Aorta (tissue), 5 donors: ENCODE measurements at regions of chr7 and their contacts with region 1.

Region 1: DNA sequence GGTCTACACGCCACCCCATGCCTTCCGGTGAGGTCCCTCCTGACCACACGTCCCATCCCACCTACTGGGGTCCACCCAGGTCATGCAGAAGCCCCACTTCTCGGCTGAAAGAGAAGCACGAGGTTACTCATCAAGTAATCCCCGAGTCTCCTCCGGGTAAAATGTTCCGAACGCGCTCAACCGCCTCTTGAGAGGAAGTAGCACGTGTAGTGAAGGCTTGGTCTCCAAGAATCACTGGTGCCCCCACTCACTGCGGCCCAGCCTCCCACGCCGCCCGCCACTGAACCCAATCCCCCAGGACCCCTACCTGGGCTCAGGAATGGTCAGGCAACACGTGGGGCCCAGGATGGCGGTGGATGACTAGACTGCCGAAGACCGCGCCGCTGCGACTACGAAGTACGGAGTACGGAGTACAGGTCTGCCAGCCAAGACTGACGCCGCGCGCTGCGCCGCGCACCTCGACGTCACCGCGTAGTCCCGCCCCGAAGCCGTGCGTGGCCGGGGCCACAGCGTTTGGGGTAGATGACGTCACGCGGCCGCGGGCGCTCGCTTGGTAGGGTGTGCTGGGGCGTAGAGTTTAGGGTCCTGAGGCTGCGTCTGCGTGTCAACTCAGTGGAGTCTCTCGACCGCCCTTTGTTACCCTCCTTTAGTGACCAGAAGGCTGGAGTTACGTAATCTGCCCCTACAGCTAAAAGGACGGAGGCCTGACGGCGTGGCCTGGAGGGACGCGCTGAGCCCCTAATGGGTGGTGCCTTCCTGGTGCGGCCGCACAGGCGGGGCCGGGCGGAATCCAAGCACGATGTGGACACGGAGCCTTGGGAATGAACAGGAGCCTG is 7.6 kb upstream of the MYO1G start:
- DNase-seq: peak; percentile 97 to 99
- ATAC-seq: peak; percentile 99
- H3K4me3 ChIP-seq: peak overlapping the region in 1 of 2 donors; percentile 24
- H3K27ac ChIP-seq: peak overlapping the region; percentile 38 to 92
- H3K4me1 ChIP-seq: peaks cover 0 to 1% of the 10 kb centered on the region in 2 donors
- H3K27me3 ChIP-seq: no peaks in the 10 kb centered on the region

Region 2: DNA sequence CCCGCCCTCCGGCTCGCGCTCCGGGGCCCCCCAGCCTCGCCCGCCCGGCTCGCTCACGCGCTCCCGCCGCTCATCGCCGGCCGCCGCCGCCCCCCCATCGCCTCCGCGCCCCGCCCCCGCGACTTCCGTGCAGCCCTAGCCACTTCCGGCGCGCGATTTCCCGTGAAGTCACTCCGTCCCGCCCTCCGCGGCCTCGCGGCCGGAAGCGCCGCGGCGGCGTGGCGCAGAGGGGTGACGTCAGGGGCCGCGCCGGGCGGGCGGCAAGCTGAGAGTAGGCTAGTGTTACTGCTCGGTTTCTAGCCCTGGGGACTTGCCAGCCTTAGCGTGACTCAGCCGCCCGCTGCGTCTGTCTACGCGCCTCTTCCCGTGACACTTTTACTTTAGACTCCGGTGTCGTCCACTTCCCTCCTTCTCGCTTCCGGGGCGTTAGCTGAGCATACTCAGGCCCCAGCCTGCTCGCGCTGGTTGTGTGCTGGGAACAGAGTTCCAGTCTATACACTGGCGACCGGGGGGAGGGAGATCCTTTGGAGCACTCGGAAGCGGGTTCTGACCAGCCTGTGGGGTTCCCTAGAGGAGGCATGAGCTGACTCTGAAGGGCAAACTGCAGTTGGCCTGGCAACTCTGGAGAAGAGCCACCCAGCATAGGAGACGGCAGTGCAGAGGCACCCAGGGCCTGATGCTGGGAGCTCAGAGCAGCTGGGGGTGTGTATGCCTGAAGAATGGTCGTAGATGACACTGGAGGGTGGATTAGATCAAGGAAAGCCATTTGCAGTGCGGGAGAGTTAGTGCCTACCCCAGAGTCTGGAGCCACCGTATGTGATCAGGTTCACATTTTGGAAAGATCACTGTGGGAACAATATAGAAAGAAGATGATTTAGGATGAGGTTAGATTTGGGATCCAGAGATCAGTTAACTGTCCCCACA is 100.8 kb before region 1 on chr7 and contains the start of gene PURB:
- intact Hi-C with region 1: loop called (anchors 10 kb)
- DNase-seq: peak; percentile 96 to 99
- ATAC-seq: peak; percentile 99
- H3K4me3 ChIP-seq: peak within 1 kb of the TSS; percentile 80 to 89
- H3K27ac ChIP-seq: peak within 1 kb of the TSS; percentile 85 to 91
- H3K4me1 ChIP-seq: peaks cover 2 to 11% of the 10 kb centered on the region in 2 donors
- H3K27me3 ChIP-seq: no peaks in the 10 kb centered on the region
- total RNA-seq, gene PURB: 26.4 to 33.9 TPM

Region 3: DNA sequence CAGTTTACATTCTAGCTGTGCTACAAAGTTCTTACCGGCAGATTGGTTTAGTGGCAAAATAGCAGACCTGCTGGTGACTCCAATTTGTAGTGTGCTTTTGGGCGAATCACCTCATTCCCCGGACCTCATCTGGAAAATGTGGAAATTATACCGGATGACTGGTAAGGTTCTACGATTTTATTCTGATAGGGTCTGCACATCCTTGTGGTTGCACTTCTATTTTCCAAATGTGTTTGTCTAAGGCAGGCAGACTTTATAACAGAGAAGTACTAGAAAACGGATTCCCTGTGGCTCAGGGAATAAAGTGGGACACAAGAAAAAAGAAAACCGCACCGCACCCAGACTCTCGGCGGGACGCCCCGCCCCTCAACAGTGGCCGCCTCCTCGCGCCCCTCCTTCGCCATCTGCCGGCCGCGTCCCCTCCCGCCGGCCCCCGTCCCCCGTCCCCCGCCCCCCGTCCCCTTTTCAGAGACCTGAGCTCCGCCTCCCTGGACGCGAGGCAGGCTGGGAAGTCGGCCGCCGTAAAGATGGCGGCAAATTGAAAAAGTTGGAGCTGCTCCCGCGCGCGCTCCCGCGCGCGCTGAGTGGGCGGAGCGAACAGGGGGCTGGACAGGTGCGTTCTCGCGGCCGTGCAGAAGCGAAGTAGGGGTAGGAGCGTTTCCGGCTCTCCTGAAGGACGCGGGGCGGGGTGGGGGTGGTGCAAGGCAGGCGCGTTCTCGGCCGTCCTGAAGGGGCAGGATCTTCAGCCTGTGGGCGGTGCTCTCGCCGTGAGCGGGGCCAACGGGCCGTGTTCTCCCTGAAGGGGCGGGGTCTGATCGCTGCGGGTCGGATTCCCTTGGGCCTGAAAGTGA is 13.0 kb after region 1 on chr7:
- intact Hi-C with region 1: loop called in 1 of 2 experiments (anchors 1 kb)
- DNase-seq: peak; percentile 99 to 100
- ATAC-seq: peak; percentile 98
- H3K4me3 ChIP-seq: peak overlapping the region; percentile 58 to 99
- H3K27ac ChIP-seq: peak overlapping the region; percentile 51 to 88
- H3K4me1 ChIP-seq: no peaks in the 10 kb centered on the region
- H3K27me3 ChIP-seq: no peaks in the 10 kb centered on the region

Region 4: GRCh38 chr7:45111298-45112223 is 125.1 kb after region 1 on chr7 and contains the start of gene TBRG4:
- intact Hi-C with region 1: loop called in 1 of 2 experiments (anchors 10 kb)
- DNase-seq: peak; percentile 97 to 99
- ATAC-seq: peak; percentile 99
- H3K4me3 ChIP-seq: peak within 1 kb of the TSS; percentile 27 to 67
- H3K27ac ChIP-seq: peak within 1 kb of the TSS; percentile 69 to 91
- H3K4me1 ChIP-seq: no peaks in the 10 kb centered on the region
- H3K27me3 ChIP-seq: no peaks in the 10 kb centered on the region
- total RNA-seq, gene TBRG4: 35.0 to 41.4 TPM